ENCODE measurements at regions of chr10 and their contacts with region 1.

Region 1: DNA sequence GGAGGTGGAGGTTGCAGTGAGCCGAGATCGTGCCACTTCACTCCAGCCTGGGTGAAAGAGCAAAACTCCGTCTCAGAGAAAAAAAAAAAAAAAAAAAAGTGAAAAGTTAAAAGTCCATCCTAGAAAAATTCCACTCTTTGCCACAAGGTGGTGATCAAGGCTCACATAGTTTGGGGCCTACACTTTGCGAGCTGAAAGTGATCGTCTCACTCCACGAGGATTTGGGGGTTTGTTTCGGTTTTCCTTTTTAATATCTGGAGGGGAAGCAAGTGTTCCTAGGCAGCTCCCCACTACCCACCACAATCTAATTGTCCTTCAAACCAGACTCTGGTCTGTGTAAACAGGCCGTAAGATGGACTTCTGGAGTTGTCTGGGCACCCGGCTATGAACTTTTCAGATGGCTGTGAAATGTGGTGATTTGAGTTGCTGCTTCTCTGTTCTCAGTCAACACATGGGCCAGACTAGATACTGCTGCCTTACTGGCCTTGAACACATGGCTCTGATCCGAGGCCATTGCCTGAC is 27.1 kb downstream of the PRLHR start:
- DNase-seq: peak; percentile 64
- ATAC-seq: peak; percentile 62
- H3K4me3 Mint-ChIP-seq: no peak overlapping the region
- H3K27ac Mint-ChIP-seq: no peak overlapping the region
- H3K4me1 Mint-ChIP-seq: no peaks in the 10 kb centered on the region
- H3K27me3 Mint-ChIP-seq: peaks cover 1% of the 10 kb centered on the region
- CTCF ChIP-seq: peak; percentile 74

Region 2: DNA sequence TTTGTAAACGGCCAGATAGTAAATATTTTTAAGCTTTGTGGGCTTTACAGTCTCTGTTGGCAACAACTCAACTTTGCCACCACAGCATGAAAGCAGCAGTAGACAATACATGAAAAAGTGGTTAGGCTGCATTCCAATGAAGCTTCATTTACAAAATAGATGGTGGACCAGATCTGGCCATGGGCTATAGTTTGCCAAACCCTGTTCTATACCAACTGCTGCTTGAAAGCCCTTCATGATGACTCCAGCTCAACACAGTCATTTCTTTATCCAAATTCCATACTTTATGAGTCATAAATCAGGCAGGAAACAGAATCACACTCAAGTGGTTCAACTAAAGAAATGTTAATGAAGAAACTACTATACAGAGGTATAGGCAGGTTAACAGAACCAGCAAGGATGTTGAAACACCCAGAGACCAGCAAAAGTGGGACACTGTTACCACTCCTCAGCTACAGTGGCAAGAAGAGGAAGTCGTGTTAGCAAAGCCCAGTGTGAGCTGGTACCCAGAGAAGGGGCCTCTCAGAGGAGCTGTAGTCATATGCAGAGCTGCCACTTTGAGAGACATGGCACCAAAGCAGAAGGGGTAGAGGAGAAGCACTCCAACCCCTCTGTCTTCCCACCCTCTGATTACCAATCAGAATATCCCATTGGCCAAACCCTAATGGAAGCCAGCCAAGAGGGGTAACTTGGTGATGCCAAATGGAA is 45.4 kb before region 1 on chr10:
- CTCF ChIA-PET with region 1: no interaction called
- POLR2A ChIA-PET with region 1: no interaction called
- intact Hi-C with region 1: no loop called
- DNase-seq: no peak
- ATAC-seq: no peak
- H3K4me3 Mint-ChIP-seq: no peak overlapping the region
- H3K27ac Mint-ChIP-seq: no peak overlapping the region
- H3K4me1 Mint-ChIP-seq: no peaks in the 10 kb centered on the region
- H3K27me3 Mint-ChIP-seq: peaks cover 21% of the 10 kb centered on the region
- CTCF ChIP-seq: no peak

Region 3: DNA sequence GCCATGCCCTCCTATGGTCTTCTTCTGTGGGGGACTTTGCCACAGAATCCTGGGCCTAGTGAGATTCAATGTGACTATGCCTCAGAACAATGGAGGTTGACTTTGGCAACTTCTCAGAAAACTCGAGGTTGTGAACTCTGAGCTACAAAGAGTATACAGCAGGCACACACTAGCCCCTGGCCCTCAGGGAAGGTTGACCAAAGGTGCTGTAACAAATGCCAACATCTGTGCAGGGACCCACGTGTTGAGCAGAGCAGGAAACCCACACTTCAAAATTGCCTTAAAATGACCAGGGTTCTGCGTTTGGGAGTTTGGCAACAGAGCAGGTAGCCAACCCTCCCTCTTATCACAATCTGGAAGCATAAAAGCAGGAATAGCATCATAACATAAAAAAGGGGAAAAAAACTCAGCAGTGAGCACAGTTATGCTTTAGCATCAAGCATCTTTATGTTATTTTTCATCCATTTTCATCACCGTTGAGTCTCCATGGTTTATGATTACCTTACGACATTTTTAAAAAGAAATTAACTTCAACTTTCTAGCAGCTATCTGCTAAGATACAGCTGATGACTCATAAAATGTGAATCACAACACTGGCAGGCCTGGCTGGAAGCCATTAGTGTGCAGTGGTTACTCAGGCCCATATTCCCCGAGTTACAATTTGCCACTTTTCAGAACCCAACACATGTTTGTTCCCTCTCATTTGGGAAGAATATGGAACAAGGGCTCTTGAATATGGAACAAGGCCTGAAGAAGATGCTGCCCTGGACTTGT is 16.0 kb after region 1 on chr10:
- CTCF ChIA-PET with region 1: interaction called, 19 read pairs
- POLR2A ChIA-PET with region 1: no interaction called
- intact Hi-C with region 1: no loop called
- DNase-seq: no peak
- ATAC-seq: no peak
- H3K4me3 Mint-ChIP-seq: no peak overlapping the region
- H3K27ac Mint-ChIP-seq: no peak overlapping the region
- H3K4me1 Mint-ChIP-seq: no peaks in the 10 kb centered on the region
- H3K27me3 Mint-ChIP-seq: peaks cover 1% of the 10 kb centered on the region
- CTCF ChIP-seq: no peak

Region 4: GRCh38 chr10:118594392-118595063 is 26.1 kb after region 1 on chr10:
- CTCF ChIA-PET with region 1: interaction called, 14 read pairs
- POLR2A ChIA-PET with region 1: no interaction called
- intact Hi-C with region 1: no loop called
- DNase-seq: peak; percentile 49
- ATAC-seq: peak; percentile 75
- H3K4me3 Mint-ChIP-seq: no peak overlapping the region
- H3K27ac Mint-ChIP-seq: no peak overlapping the region
- H3K4me1 Mint-ChIP-seq: peaks cover 13% of the 10 kb centered on the region
- H3K27me3 Mint-ChIP-seq: peaks cover 57% of the 10 kb centered on the region
- CTCF ChIP-seq: no peak

Region 5: DNA sequence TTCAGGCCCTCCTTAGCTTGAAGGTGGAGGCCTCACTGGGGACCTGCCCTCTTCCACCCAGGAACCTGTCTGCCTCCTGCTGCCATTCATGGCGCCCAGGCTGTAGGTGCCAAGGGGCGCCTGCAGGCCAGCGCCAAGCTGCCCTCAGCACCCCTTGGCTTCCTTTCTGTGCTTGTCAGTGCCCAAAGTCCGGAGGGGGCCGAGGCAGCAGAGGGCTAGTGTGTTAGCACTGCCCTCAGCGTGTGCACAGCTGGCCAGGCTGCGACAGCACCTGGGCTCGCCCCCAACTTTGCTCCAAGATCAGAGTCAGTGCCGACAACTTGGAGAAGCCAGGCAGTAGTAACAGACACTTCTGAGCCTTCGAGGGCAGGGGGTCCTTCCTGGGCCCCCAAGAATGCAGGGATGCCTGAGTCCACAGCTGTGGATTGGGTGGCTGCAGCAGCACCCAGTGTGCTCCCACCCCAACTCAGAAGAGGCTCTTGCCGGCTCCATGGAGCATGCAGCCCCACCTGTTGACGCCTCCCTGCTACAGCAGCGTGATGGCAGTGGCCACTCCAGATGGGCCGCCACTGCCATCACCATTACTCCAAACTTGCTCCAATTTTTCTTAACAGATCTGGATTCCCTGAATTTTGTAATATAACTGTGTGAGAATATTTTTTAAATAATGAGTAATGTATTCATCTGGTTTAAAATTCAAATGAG is 144.7 kb after region 1 on chr10:
- CTCF ChIA-PET with region 1: interaction called, 86 read pairs
- POLR2A ChIA-PET with region 1: interaction called, 3 read pairs
- intact Hi-C with region 1: no loop called
- DNase-seq: no peak
- ATAC-seq: no peak
- H3K4me3 Mint-ChIP-seq: no peak overlapping the region
- H3K27ac Mint-ChIP-seq: no peak overlapping the region
- H3K4me1 Mint-ChIP-seq: peaks cover 14% of the 10 kb centered on the region
- H3K27me3 Mint-ChIP-seq: no peaks in the 10 kb centered on the region
- CTCF ChIP-seq: peak; percentile 13

Region 6: GRCh38 chr10:118720685-118721538 is 152.5 kb after region 1 on chr10:
- CTCF ChIA-PET with region 1: interaction called, 86 read pairs
- POLR2A ChIA-PET with region 1: no interaction called
- intact Hi-C with region 1: loop called (anchors 1 kb)
- DNase-seq: peak; percentile 75
- ATAC-seq: peak; percentile 42
- H3K4me3 Mint-ChIP-seq: no peak overlapping the region
- H3K27ac Mint-ChIP-seq: no peak overlapping the region
- H3K4me1 Mint-ChIP-seq: peaks cover 8% of the 10 kb centered on the region
- H3K27me3 Mint-ChIP-seq: no peaks in the 10 kb centered on the region
- CTCF ChIP-seq: peak; percentile 88

Region 7: GRCh38 chr10:118850418-118851061 is 282.2 kb after region 1 on chr10:
- CTCF ChIA-PET with region 1: interaction called, 12 read pairs
- POLR2A ChIA-PET with region 1: no interaction called
- intact Hi-C with region 1: loop called (anchors 10 kb)
- DNase-seq: peak; percentile 94
- ATAC-seq: peak; percentile 87
- H3K4me3 Mint-ChIP-seq: no peak overlapping the region
- H3K27ac Mint-ChIP-seq: no peak overlapping the region
- H3K4me1 Mint-ChIP-seq: no peaks in the 10 kb centered on the region
- H3K27me3 Mint-ChIP-seq: peaks cover 2% of the 10 kb centered on the region
- CTCF ChIP-seq: peak; percentile 75

Measured in activated CD8-positive, alpha-beta T cell treated with anti-CD3 and anti-CD28 coated beads for 36 hours (primary cell).